Activated CD4-positive, alpha-beta memory T cell treated with anti-CD3 and anti-CD28 coated beads, Interleukin-2, amount 10 ng/mL, durations not matched to agents 7 days and 5 days (primary cell): ENCODE measurements at regions of chr19 and their contacts with region 1.

Region 1: GRCh38 chr19:40465557-40466150 is at the start of gene BLVRB:
- DNase-seq: peak; percentile 100
- H3K4me3 Mint-ChIP-seq: peak within 1 kb of the TSS; percentile 87
- H3K27ac Mint-ChIP-seq: peak within 1 kb of the TSS; percentile 70
- H3K4me1 Mint-ChIP-seq: peaks cover 36% of the 10 kb centered on the region
- H3K27me3 Mint-ChIP-seq: peaks cover 23% of the 10 kb centered on the region
- total RNA-seq, gene BLVRB: 20.1 to 20.5 TPM

Region 2: GRCh38 chr19:40425450-40426287 is 40.0 kb before region 1 on chr19 and contains the start of gene SERTAD1:
- CTCF ChIA-PET with region 1: interaction called, 51 read pairs
- POLR2A ChIA-PET with region 1: interaction called, 22 read pairs
- DNase-seq: peak; percentile 100
- H3K4me3 Mint-ChIP-seq: peak within 1 kb of the TSS; percentile 88
- H3K27ac Mint-ChIP-seq: peak within 1 kb of the TSS; percentile 89
- H3K4me1 Mint-ChIP-seq: peaks cover 24% of the 10 kb centered on the region
- H3K27me3 Mint-ChIP-seq: no peaks in the 10 kb centered on the region
- total RNA-seq, gene SERTAD1: 10.6 to 10.7 TPM

Region 3: GRCh38 chr19:40444192-40445028 is 21.2 kb before region 1 on chr19 and contains the start of gene SERTAD3:
- CTCF ChIA-PET with region 1: interaction called, 30 read pairs
- POLR2A ChIA-PET with region 1: interaction called, 26 read pairs
- DNase-seq: peak; percentile 98
- H3K4me3 Mint-ChIP-seq: peak within 1 kb of the TSS; percentile 99
- H3K27ac Mint-ChIP-seq: peak within 1 kb of the TSS; percentile 97
- H3K4me1 Mint-ChIP-seq: peaks cover 21% of the 10 kb centered on the region
- H3K27me3 Mint-ChIP-seq: no peaks in the 10 kb centered on the region
- total RNA-seq, gene SERTAD3: 18.0 to 20.3 TPM

Region 4: DNA sequence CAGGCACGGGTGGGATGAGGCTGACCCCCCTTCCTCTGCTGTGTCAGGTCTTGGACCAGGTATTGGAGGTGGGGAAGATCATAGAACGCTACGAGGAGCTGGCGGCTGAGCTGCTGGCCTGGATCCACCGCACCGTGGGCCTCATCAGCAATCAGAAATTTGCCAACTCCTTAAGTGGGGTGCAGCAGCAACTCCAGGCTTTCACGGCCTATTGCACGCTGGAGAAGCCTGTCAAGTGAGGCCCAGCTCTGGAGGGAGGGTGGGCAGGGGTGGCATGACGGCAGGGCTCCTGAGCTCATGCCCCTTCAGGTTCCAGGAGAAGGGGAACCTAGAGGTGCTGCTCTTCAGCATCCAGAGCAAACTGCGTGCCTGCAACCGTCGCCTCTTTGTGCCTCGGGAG is 36.4 kb after region 1 on chr19:
- CTCF ChIA-PET with region 1: no interaction called
- POLR2A ChIA-PET with region 1: no interaction called
- DNase-seq: no peak
- H3K4me3 Mint-ChIP-seq: no peak overlapping the region
- H3K27ac Mint-ChIP-seq: no peak overlapping the region
- H3K4me1 Mint-ChIP-seq: no peaks in the 10 kb centered on the region
- H3K27me3 Mint-ChIP-seq: peaks cover 4% of the 10 kb centered on the region

Region 5: DNA sequence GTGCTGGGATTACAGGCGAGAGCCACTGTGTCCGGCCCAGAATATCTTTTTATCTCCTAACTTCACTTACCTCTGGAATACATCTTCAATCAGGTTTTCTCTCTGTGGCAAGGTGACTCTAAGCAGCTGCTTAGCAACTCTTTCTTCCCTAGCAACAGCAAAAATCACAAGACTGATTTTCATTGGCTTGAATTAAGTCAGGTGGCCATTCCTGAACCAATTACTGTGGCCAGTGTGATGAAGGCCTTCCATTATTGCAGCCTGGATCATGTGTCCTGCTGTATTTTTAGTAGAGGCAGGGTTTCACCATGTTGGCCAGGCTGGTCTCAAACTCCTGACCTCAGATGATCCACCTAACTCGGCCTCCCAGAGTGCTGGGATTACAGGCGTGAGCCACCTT is 126.5 kb after region 1 on chr19:
- CTCF ChIA-PET with region 1: no interaction called
- POLR2A ChIA-PET with region 1: no interaction called
- DNase-seq: no peak
- H3K4me3 Mint-ChIP-seq: no peak overlapping the region
- H3K27ac Mint-ChIP-seq: no peak overlapping the region
- H3K4me1 Mint-ChIP-seq: peaks cover 10% of the 10 kb centered on the region
- H3K27me3 Mint-ChIP-seq: peaks cover 7% of the 10 kb centered on the region

Region 6: GRCh38 chr19:40603389-40604135 is 137.9 kb after region 1 on chr19:
- CTCF ChIA-PET with region 1: interaction called, 30 read pairs
- POLR2A ChIA-PET with region 1: interaction called, 5 read pairs
- DNase-seq: peak; percentile 100
- H3K4me3 Mint-ChIP-seq: peak overlapping the region; percentile 86
- H3K27ac Mint-ChIP-seq: peak overlapping the region; percentile 96
- H3K4me1 Mint-ChIP-seq: peaks cover 78% of the 10 kb centered on the region
- H3K27me3 Mint-ChIP-seq: peaks cover 30% of the 10 kb centered on the region